Mucosa of descending colon (tissue), 3 donors: ENCODE measurements at regions of chr12 and their contacts with region 1.

Region 1: DNA sequence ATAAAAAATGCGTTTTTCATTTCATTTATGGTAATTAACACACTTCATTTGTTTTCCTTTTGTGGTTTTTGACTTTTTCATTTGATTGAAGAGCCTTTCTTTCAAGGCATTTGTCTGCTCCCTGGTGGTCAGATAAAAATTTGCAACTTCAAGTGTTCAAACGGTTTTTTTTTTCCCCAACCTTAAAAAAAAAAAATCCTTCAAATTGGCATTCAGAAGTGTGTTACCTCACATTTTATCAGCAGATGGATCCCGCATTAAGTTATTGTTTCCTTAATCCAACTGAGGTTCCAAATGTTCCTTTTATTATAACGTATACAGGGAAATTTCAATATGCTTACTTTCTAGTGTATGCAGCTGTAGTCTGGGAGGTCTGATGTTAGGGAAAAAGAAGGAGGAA is 47.2 kb downstream of the MYF5 start:
- DNase-seq: no peak
- ATAC-seq: no peak
- H3K4me3 ChIP-seq: no peak overlapping the region
- H3K4me1 ChIP-seq: no peaks in the 10 kb centered on the region
- CTCF ChIP-seq: no peak

Region 2: GRCh38 chr12:80412369-80412953 is 351.4 kb before region 1 on chr12:
- intact Hi-C with region 1: loop called in 1 of 2 experiments (anchors 10 kb)
- DNase-seq: peak in 1 of 3 donors; percentile 7
- ATAC-seq: no peak
- H3K4me3 ChIP-seq: no peak overlapping the region
- H3K4me1 ChIP-seq: no peaks in the 10 kb centered on the region
- CTCF ChIP-seq: peak; percentile 30